ENCODE measurements at regions of chr16 and their contacts with region 1.

Region 1: DNA sequence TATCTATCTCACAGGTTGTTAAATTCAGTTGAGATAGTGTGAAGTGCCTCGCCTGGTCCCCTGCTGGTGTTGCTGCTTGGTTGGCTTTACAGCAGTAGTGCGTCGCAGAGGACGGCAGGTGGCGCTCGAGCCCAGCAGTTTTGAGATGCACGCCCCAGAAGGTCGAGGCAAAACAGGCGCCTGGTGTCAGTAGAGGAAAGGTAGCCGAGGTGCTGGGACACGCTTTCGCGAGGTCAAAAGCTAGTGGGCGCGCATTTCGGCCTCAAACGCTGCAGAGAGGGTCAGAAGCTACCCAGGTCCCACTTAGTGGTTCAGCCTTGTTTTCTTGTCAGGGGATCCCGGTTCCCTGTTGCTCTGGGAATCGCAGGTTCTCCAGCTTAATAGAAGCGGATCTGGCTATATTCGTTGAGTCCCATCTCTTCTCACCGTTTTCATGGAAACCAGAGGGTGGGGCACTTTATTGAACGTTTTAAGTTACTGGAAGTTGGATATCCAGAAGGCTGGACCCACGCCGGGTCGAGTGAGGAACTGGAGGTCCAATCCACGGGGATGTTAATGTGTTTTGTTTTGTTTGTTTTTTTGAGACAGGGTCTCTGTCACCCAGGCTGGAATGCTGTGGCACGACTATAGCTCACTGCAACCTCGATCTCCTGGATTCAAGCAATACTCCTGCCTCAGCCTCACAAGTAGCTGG is 10.3 kb upstream of the ZFP90 start:
- DNase-seq: peak; percentile 81
- H3K4me3 Mint-ChIP-seq: peak overlapping the region; percentile 82
- H3K27ac Mint-ChIP-seq: no peak overlapping the region
- H3K4me1 Mint-ChIP-seq: peaks cover 11% of the 10 kb centered on the region
- H3K27me3 Mint-ChIP-seq: peaks cover 2% of the 10 kb centered on the region

Region 2: DNA sequence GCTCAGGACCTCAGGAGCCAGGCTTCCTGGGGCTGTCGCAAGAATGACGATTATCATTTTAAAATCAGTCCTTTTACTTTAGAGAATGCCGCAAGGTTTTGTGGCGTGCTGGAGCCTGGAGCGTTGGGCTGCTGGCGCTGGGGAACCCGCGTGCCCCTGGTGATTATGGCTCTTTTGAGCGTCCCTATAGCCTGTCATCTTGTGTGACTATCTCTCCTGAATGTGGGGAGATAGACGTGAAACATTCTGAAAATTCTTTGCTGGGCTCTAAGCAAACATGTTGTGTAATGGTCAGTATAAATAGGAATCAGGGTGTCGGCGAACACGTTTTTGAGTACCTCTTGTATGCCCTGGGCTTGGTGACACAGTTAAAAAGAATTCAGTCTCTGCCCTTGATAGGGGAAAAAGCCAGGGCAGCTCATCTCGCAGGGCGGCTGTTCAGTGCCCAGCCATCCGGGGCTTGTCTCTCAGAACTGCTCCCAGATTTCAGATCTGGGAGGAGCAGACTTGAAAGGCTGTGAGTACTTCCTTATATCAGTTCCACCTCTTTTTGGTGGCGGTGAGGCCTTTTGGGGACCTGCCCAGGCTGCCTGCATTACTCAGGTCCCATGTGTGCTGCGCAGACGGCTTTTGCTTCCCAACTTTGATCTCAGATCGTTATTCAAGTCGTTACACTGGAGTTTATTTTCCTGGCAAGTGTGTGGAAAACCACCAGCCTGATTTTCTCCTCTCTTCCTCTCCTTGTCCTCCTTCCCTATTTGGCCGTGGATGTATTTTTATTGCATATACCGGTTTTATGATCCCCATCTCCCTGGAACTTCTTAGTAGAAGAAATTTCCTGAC is 263.5 kb before region 1 on chr16:
- intact Hi-C with region 1: no loop called
- DNase-seq: no peak
- H3K4me3 Mint-ChIP-seq: peak overlapping the region; percentile 93
- H3K27ac Mint-ChIP-seq: peak overlapping the region; percentile 97
- H3K4me1 Mint-ChIP-seq: peaks cover 45% of the 10 kb centered on the region
- H3K27me3 Mint-ChIP-seq: no peaks in the 10 kb centered on the region

Region 3: GRCh38 chr16:68478526-68479250 is 50.1 kb before region 1 on chr16:
- intact Hi-C with region 1: no loop called
- DNase-seq: no peak
- H3K4me3 Mint-ChIP-seq: no peak overlapping the region
- H3K27ac Mint-ChIP-seq: no peak overlapping the region
- H3K4me1 Mint-ChIP-seq: no peaks in the 10 kb centered on the region
- H3K27me3 Mint-ChIP-seq: peaks cover 27% of the 10 kb centered on the region

Region 4: GRCh38 chr16:68538880-68539701 is 10.3 kb after region 1 on chr16 and contains the start of gene ZFP90:
- intact Hi-C with region 1: loop called (anchors 1 kb)
- DNase-seq: peak; percentile 83
- H3K4me3 Mint-ChIP-seq: peak within 1 kb of the TSS; percentile 89
- H3K27ac Mint-ChIP-seq: peak within 1 kb of the TSS; percentile 90
- H3K4me1 Mint-ChIP-seq: peaks cover 11% of the 10 kb centered on the region
- H3K27me3 Mint-ChIP-seq: no peaks in the 10 kb centered on the region
- total RNA-seq, gene ZFP90: 19.4 and 20.8 TPM in 2 replicates

Region 5: GRCh38 chr16:68590201-68590994 is 61.6 kb after region 1 on chr16:
- intact Hi-C with region 1: loop called (anchors 2 kb)
- DNase-seq: peak; percentile 31
- H3K4me3 Mint-ChIP-seq: no peak overlapping the region
- H3K27ac Mint-ChIP-seq: no peak overlapping the region
- H3K4me1 Mint-ChIP-seq: peaks cover 2% of the 10 kb centered on the region
- H3K27me3 Mint-ChIP-seq: peaks cover 3% of the 10 kb centered on the region

Region 6: GRCh38 chr16:68612996-68613395 is 84.2 kb after region 1 on chr16:
- intact Hi-C with region 1: no loop called
- DNase-seq: no peak
- H3K4me3 Mint-ChIP-seq: no peak overlapping the region
- H3K27ac Mint-ChIP-seq: no peak overlapping the region
- H3K4me1 Mint-ChIP-seq: no peaks in the 10 kb centered on the region
- H3K27me3 Mint-ChIP-seq: no peaks in the 10 kb centered on the region

Region 7: GRCh38 chr16:68668266-68668665 is 139.4 kb after region 1 on chr16:
- intact Hi-C with region 1: loop called (anchors 10 kb)
- DNase-seq: no peak
- H3K4me3 Mint-ChIP-seq: no peak overlapping the region
- H3K27ac Mint-ChIP-seq: peak overlapping the region; percentile 21
- H3K4me1 Mint-ChIP-seq: peaks cover 10% of the 10 kb centered on the region
- H3K27me3 Mint-ChIP-seq: no peaks in the 10 kb centered on the region

Region 8: DNA sequence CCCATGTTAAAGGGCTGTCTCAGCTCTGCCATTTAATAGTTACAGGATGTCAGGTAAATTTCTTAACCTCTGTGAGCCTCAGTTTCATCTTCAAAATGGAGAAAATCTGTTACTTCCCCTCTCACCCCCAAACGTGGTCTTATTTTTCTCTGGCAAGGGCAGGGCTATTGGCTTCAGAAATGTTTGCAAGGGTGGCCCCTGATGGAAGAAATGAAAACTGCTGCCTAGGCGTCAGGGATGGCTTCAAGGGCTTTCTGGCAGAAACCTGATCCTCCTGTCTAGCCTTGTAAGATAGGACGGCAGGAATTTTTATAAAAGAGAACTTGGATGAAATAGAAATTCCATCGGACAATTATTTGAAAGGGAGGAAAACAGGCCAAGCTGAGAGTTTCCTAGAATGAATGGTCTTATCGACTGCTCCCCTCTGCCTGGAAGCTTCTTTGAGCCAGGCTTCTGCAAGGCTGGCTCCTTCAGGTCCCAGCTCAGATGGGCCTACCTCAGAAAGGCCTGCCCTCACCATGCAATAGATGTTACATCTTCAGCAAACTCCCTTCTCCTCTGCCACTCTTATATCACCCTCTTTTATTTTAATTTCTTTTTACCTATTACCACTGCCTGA is 271.5 kb after region 1 on chr16:
- intact Hi-C with region 1: loop called (anchors 1 kb)
- DNase-seq: peak; percentile 34
- H3K4me3 Mint-ChIP-seq: no peak overlapping the region
- H3K27ac Mint-ChIP-seq: no peak overlapping the region
- H3K4me1 Mint-ChIP-seq: peaks cover 2% of the 10 kb centered on the region
- H3K27me3 Mint-ChIP-seq: peaks cover 9% of the 10 kb centered on the region

Region 9: DNA sequence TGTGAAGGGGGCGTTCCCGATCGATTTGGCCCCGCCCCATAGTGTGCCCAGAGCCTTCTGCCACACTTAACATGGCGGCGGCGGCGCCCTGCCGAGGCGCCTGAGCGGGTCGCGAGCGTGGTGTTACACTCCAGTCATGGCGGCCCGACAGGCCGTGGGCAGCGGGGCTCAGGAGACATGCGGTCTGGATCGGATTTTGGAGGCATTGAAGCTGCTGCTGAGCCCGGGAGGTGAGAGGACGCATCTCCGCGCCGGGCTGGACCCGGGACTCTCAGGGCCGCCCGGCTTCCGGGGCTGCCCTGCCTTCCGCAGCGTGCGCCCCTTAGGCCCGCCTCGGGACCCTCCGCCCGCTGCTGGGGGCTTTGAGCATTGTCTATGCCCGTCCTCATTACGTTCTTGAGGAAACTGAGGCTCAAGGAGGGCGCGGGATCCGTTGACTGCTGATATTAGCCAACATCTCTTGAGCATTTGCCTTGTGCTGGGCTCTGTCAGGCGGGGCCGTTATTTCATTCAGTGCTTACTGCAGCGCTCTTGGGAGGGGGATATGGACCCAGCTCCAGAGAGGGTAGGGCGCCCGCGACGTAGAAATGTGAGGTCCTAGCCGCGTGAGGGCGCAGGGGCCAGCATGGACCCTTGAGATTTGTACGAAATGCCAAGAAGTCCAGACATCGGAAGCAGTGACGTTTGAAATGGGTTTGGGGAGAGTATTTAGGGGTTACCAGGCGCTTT is 314.8 kb after region 1 on chr16 and contains the start of gene TANGO6:
- intact Hi-C with region 1: loop called (anchors 1 kb)
- DNase-seq: peak; percentile 87
- H3K4me3 Mint-ChIP-seq: peak within 1 kb of the TSS; percentile 95
- H3K27ac Mint-ChIP-seq: peak within 1 kb of the TSS; percentile 87
- H3K4me1 Mint-ChIP-seq: peaks cover 22% of the 10 kb centered on the region
- H3K27me3 Mint-ChIP-seq: no peaks in the 10 kb centered on the region
- total RNA-seq, gene TANGO6: 29.3 and 30.0 TPM in 2 replicates

Region 10: GRCh38 chr16:69123910-69124309 is 595.1 kb after region 1 on chr16:
- intact Hi-C with region 1: loop called (anchors 2 kb)
- DNase-seq: peak; percentile 49
- H3K4me3 Mint-ChIP-seq: no peak overlapping the region
- H3K27ac Mint-ChIP-seq: no peak overlapping the region
- H3K4me1 Mint-ChIP-seq: peaks cover 6% of the 10 kb centered on the region
- H3K27me3 Mint-ChIP-seq: no peaks in the 10 kb centered on the region

Measured in activated T-helper 2 cell treated with anti-CD3 and anti-CD28 coated beads, Interferon-gamma antibody, Interleukin-2, Interleukin-4, amounts not matched to agents 10 μg/mL and 5 μg/mL and 100 μg/mL, durations not matched to agents 14 hours and 24 hours and 36 hours (primary cell).